HepG2 (cell line): ENCODE measurements at regions of chr3 and their contacts with region 1.

Region 1: GRCh38 chr3:66276705-66277274 is 56.0 kb downstream of the SLC25A26 start:
- DNase-seq: peak; percentile 55
- ATAC-seq: peak; percentile 41; the same call in 1 of the 3 replicates
- H3K4me3 ChIP-seq: no peak overlapping the region
- H3K27ac ChIP-seq: no peak overlapping the region
- H3K4me1 ChIP-seq: peaks cover 19% of the 10 kb centered on the region
- H3K27me3 ChIP-seq: no peaks in the 10 kb centered on the region
- CTCF ChIP-seq: peak; percentile 69
- EP300 ChIP-seq: no peak
- POLR2A ChIP-seq: no peak
- RAD21 ChIP-seq: 0 out of 2 replicates have a peak, but pooled peaks have one; percentile 41

Region 2: DNA sequence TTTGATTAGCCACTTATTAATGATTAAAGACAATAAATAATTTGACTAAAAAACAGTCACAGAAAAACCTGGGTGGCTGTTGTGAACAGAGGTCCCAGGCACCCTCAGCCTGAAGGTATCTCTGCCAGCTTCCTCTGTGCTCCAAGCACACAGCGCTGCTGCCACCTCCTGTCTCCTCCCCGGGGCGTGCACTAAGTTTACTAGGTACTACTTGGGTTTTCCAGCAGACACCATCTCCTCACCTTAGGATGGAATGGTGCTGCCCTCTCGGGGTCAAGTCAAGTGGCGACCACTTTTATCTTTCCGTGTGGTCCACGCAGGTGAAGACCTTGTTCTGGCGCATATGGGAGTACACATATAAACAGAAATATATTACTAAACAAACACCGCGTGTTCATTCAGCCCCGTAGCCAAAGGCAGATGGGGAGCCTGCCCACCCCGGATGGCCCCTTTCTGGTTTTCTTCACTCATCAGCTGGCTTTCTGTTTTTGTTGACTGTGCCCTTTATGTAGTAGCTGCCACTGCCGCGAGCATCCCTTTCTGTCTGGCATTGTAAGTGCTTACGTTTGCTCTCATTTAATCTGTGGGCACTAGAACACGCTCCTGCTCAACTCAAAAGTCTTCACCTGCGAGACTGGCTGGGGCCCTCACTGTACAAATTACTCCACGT is 96.0 kb after region 1 on chr3:
- CTCF ChIA-PET with region 1: interaction called, 3 read pairs
- POLR2A ChIA-PET with region 1: no interaction called
- in situ Hi-C with region 1: no loop called
- intact Hi-C with region 1: loop called (anchors 1 kb)
- DNase-seq: peak; percentile 10
- ATAC-seq: peak; percentile 70
- H3K4me3 ChIP-seq: no peak overlapping the region
- H3K27ac ChIP-seq: no peak overlapping the region
- H3K4me1 ChIP-seq: peaks cover 19% of the 10 kb centered on the region
- H3K27me3 ChIP-seq: no peaks in the 10 kb centered on the region
- CTCF ChIP-seq: peak; percentile 61
- EP300 ChIP-seq: no peak
- POLR2A ChIP-seq: no peak
- RAD21 ChIP-seq: peak; percentile 38; the same call in 1 of the 2 replicates

Region 3: DNA sequence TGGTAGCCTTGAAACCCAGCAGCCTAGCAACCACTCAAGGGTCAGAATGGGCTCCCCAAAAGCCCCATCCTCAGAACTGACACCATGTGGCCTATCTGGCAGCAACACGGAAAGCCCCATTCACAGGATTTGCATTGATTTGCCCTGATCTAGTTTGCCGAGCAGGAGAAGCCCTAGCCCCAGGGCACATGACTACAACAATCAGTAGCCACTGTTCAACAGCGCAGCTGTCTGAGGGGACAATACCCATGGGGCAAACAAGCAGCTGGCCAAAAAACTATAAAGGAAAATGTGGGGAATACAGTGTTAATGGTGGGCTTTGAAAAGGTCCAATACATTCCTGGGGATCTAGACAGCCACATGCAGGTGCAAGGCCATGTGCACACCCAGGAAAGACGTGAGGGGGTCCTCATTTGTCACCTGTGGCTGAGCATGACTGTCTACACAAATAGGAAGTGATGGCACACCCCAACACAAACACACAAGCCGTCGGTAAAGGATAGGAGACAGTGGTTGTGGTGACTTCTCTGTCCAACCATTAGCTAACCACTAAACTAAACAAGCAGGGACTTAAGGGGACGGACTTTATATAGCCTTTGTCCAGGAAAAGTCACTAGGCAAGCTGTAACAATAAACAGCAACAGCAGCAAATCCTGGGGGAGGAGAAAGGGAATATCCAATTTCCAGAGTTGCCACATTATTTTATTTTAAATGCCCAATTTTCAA is 110.3 kb after region 1 on chr3:
- CTCF ChIA-PET with region 1: no interaction called
- POLR2A ChIA-PET with region 1: no interaction called
- in situ Hi-C with region 1: loop called (anchors 10 kb)
- intact Hi-C with region 1: no loop called
- DNase-seq: no peak
- ATAC-seq: no peak
- H3K4me3 ChIP-seq: no peak overlapping the region
- H3K27ac ChIP-seq: no peak overlapping the region
- H3K4me1 ChIP-seq: no peaks in the 10 kb centered on the region
- H3K27me3 ChIP-seq: no peaks in the 10 kb centered on the region
- CTCF ChIP-seq: no peak
- EP300 ChIP-seq: no peak
- POLR2A ChIP-seq: no peak
- RAD21 ChIP-seq: no peak

Region 4: GRCh38 chr3:66500576-66501482 is 224.0 kb after region 1 on chr3 and contains the start of gene LRIG1:
- CTCF ChIA-PET with region 1: no interaction called
- POLR2A ChIA-PET with region 1: no interaction called
- in situ Hi-C with region 1: no loop called
- intact Hi-C with region 1: loop called (anchors 10 kb)
- DNase-seq: peak; percentile 92
- ATAC-seq: peak; percentile 93
- H3K4me3 ChIP-seq: peak within 1 kb of the TSS; percentile 83 to 96 (median 94)
- H3K27ac ChIP-seq: peak within 1 kb of the TSS; percentile 71
- H3K4me1 ChIP-seq: peaks cover 71% of the 10 kb centered on the region
- H3K27me3 ChIP-seq: peaks cover 0 to 14% of the 10 kb centered on the region in 2 experiments; a peak in 3 of 5 replicates
- CTCF ChIP-seq: peak; percentile 44
- EP300 ChIP-seq: peak in 1 of 2 experiments; percentile 45; a peak in 1 of 4 replicates
- POLR2A ChIP-seq: peak; percentile 72 to 76
- RAD21 ChIP-seq: peak; percentile 22; the same call in 1 of the 2 replicates
- total RNA-seq, gene LRIG1: 16.3 and 24.8 TPM in 2 replicates

Region 5: GRCh38 chr3:66816090-66816761 is 539.4 kb after region 1 on chr3:
- CTCF ChIA-PET with region 1: interaction called, 23 read pairs
- POLR2A ChIA-PET with region 1: no interaction called
- in situ Hi-C with region 1: loop called (anchors 5 kb)
- intact Hi-C with region 1: loop called (anchors 1 kb)
- DNase-seq: peak; percentile 36
- ATAC-seq: peak; percentile 82
- H3K4me3 ChIP-seq: no peak overlapping the region
- H3K27ac ChIP-seq: no peak overlapping the region
- H3K4me1 ChIP-seq: peaks cover 23% of the 10 kb centered on the region
- H3K27me3 ChIP-seq: no peaks in the 10 kb centered on the region
- CTCF ChIP-seq: peak; percentile 65
- EP300 ChIP-seq: no peak
- POLR2A ChIP-seq: no peak
- RAD21 ChIP-seq: peak; percentile 53; the same call in 1 of the 2 replicates

Region 6: GRCh38 chr3:66822186-66823008 is 545.6 kb after region 1 on chr3:
- CTCF ChIA-PET with region 1: interaction called, 23 read pairs
- POLR2A ChIA-PET with region 1: no interaction called
- in situ Hi-C with region 1: loop called (anchors 5 kb)
- intact Hi-C with region 1: loop called (anchors 1 kb)
- DNase-seq: peak; percentile 49
- ATAC-seq: peak; percentile 81
- H3K4me3 ChIP-seq: no peak overlapping the region
- H3K27ac ChIP-seq: no peak overlapping the region
- H3K4me1 ChIP-seq: peaks cover 62% of the 10 kb centered on the region
- H3K27me3 ChIP-seq: no peaks in the 10 kb centered on the region
- CTCF ChIP-seq: peak; percentile 70
- EP300 ChIP-seq: no peak
- POLR2A ChIP-seq: no peak
- RAD21 ChIP-seq: peak; percentile 62